ENCODE measurements at regions of chr18 and their contacts with region 1.

Region 1: DNA sequence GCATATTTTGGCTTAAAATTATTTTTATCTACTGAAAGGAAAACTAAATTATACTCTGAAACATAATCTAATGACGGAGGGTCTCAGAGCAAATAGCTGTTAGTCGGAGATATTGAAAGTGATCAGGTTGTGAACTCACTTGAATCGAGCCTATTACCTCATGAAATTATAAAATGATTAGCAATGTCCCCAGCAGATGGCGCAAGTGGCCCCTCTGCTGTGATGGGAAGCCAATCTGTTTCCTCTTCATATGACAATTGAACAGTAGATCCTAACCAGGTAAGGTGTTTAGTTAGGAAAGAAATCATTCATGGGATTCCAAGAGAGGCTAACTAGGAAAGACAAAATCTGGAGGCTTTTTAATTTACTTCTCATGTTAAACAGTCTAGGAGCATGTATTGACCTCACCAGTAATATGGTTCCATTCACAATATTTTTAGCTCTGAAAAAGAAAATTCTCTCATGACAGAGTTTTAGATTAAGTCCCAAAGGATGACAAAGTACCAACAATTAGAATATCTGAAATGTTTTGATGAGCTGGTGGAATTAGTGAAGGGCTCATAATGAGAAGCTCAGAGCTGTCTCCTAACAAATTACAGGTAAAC is 29.9 kb upstream of the MPPE1 start:
- DNase-seq: peak; percentile 53 to 72 (median 65)
- H3K4me3 ChIP-seq: no peak overlapping the region
- H3K4me3 Mint-ChIP-seq: no peak overlapping the region
- H3K27ac ChIP-seq: no peak overlapping the region
- H3K27ac Mint-ChIP-seq: peak overlapping the region in 1 of 7 donors; percentile 6
- H3K4me1 ChIP-seq: no peaks in the 10 kb centered on the region
- H3K4me1 Mint-ChIP-seq: peaks cover 0 to 5% (median 0%) of the 10 kb centered on the region in 4 donors
- H3K27me3 ChIP-seq: no peaks in the 10 kb centered on the region
- H3K27me3 Mint-ChIP-seq: no peaks in the 10 kb centered on the region

Region 2: DNA sequence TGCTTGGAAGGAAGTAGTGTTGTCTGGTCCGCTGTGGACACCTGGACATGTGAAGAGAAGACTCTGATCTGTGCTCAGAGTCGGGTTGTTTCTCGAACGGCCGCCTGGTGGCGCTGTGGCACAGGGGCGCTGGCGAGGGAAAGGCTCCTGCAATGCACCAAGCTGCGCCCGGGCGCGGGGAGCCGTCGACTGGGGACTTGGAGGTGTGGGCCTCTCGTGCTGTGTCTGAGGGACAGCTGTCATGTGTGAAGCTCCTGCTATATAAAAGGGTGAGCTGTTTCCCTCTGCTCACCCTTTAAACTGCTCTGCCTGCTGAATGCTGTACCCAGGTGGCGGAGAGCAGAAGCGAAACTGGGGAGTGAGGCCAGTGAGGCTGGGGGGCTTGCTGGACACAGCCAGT is 204.9 kb before region 1 on chr18:
- CTCF ChIA-PET with region 1: interaction called, 14 read pairs
- POLR2A ChIA-PET with region 1: no interaction called
- intact Hi-C with region 1: loop called (anchors 2 kb)
- DNase-seq: peak; percentile 38 to 58 (median 44)
- H3K4me3 ChIP-seq: no peak overlapping the region
- H3K4me3 Mint-ChIP-seq: peak overlapping the region in 2 of 8 donors; percentile 22 to 27
- H3K27ac ChIP-seq: no peak overlapping the region
- H3K27ac Mint-ChIP-seq: no peak overlapping the region
- H3K4me1 ChIP-seq: no peaks in the 10 kb centered on the region
- H3K4me1 Mint-ChIP-seq: peaks cover 0 to 3% (median under 1%) of the 10 kb centered on the region in 4 donors
- H3K27me3 ChIP-seq: no peaks in the 10 kb centered on the region
- H3K27me3 Mint-ChIP-seq: peaks cover 18 to 26% of the 10 kb centered on the region in 2 donors

Region 3: DNA sequence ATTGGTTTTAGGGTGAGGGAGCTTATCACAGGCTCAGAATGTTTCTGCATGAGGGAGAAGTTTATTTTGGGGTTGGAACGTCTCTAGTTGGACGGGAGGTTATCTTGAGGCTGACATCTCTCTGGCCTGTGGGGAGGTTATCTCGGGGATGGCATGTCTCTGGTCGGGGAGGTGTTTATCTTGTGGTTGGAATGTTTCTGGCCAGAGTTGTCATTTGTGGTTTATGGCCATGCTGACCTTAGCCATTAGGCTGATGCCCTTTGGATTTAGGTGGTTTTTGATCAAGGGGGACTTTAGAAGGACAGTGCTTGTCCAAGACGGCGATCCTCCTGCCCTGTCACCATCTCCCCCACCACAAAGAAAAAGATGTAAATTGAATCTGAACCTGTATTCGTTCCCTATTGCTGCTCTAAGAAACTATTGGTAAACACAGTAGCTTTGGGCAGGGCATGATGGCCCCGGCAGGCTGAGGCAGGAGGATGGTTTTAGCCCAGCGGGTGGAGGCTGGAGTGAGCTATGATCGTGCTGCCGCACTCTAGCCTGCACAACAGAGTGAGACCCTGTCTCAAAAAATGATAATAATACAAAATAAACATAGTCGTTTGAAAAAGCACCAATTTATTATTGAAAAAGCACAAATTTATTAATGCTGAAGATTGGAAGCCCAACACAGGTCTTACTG is 12.0 kb before region 1 on chr18:
- CTCF ChIA-PET with region 1: interaction called, 50 read pairs
- POLR2A ChIA-PET with region 1: interaction called, 4 read pairs
- intact Hi-C with region 1: no loop called
- DNase-seq: no peak
- H3K4me3 ChIP-seq: no peak overlapping the region
- H3K4me3 Mint-ChIP-seq: no peak overlapping the region
- H3K27ac ChIP-seq: no peak overlapping the region
- H3K27ac Mint-ChIP-seq: no peak overlapping the region
- H3K4me1 ChIP-seq: no peaks in the 10 kb centered on the region
- H3K4me1 Mint-ChIP-seq: peaks cover 0 to 1% (median 0%) of the 10 kb centered on the region in 4 donors
- H3K27me3 ChIP-seq: no peaks in the 10 kb centered on the region
- H3K27me3 Mint-ChIP-seq: peaks cover 0 to 1% of the 10 kb centered on the region in 2 donors

Region 4: DNA sequence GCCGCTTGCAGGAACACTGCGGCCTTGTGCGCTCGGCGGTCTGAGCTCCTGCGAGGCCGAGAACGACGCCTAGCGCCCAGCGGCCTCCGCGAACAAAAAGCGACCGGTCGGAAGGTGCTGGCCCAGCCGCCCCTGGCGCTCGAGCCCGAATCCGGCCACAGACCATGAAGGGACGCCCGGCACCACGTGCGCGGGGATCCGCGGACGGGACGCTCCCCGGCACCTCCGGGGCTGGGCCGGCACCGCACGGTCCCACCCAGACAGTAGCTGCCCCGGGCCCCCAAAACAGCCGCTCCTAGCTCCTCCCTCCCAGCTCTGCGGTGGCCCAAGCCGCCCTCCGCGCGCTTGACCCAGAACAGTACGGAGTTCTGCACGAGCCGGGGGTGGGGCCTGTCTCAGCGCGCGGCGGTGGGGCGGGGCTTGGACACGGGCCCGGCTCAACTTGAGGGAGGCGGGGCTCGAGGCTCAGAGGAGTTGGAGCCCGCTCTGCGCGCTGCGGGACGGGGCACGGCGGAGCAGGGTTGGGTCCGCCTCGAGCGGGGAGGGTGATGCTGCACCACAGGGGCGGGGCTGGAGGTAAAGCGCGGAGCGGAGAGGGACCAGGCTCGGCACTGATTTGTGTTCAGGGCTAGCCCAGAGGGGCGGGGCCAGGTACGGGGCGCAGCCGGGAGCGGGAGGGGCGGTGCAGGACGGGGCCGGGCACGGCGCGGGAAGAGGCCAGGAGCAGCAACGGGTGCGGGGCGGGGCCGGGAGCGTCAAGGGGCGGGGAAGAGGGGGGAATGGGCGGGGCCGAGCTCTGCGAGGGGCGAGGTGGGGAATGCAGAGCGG is 42.8 kb after region 1 on chr18:
- CTCF ChIA-PET with region 1: interaction called, 665 read pairs
- POLR2A ChIA-PET with region 1: interaction called, 5 read pairs
- intact Hi-C with region 1: loop called (anchors 1 kb)
- DNase-seq: peak; percentile 94 to 95 (median 94)
- H3K4me3 ChIP-seq: peak overlapping the region; percentile 29 to 69
- H3K4me3 Mint-ChIP-seq: peak overlapping the region; percentile 81 to 93 (median 86)
- H3K27ac ChIP-seq: peak overlapping the region; percentile 9
- H3K27ac Mint-ChIP-seq: peak overlapping the region; percentile 25 to 79 (median 71)
- H3K4me1 ChIP-seq: peaks cover 12% of the 10 kb centered on the region
- H3K4me1 Mint-ChIP-seq: peaks cover 10 to 15% (median 12%) of the 10 kb centered on the region in 4 donors
- H3K27me3 ChIP-seq: no peaks in the 10 kb centered on the region
- H3K27me3 Mint-ChIP-seq: no peaks in the 10 kb centered on the region

Region 5: GRCh38 chr18:12031846-12032245 is 93.9 kb after region 1 on chr18:
- CTCF ChIA-PET with region 1: interaction called, 132 read pairs
- POLR2A ChIA-PET with region 1: no interaction called
- intact Hi-C with region 1: no loop called
- DNase-seq: no peak
- H3K4me3 ChIP-seq: no peak overlapping the region
- H3K4me3 Mint-ChIP-seq: no peak overlapping the region
- H3K27ac ChIP-seq: no peak overlapping the region
- H3K27ac Mint-ChIP-seq: no peak overlapping the region
- H3K4me1 ChIP-seq: no peaks in the 10 kb centered on the region
- H3K4me1 Mint-ChIP-seq: no peaks in the 10 kb centered on the region
- H3K27me3 ChIP-seq: no peaks in the 10 kb centered on the region
- H3K27me3 Mint-ChIP-seq: peaks cover 0 to 2% of the 10 kb centered on the region in 2 donors

Region 6: GRCh38 chr18:12165038-12165768 is 227.2 kb after region 1 on chr18:
- CTCF ChIA-PET with region 1: no interaction called
- POLR2A ChIA-PET with region 1: no interaction called
- intact Hi-C with region 1: no loop called
- DNase-seq: no peak
- H3K4me3 ChIP-seq: no peak overlapping the region
- H3K4me3 Mint-ChIP-seq: no peak overlapping the region
- H3K27ac ChIP-seq: no peak overlapping the region
- H3K27ac Mint-ChIP-seq: no peak overlapping the region
- H3K4me1 ChIP-seq: no peaks in the 10 kb centered on the region
- H3K4me1 Mint-ChIP-seq: no peaks in the 10 kb centered on the region
- H3K27me3 ChIP-seq: no peaks in the 10 kb centered on the region
- H3K27me3 Mint-ChIP-seq: peaks cover 4% of the 10 kb centered on the region in 2 donors